ENCODE measurements at regions of chr15 and their contacts with region 1.

Region 1: GRCh38 chr15:60520825-60521368 is 42.0 kb upstream of the ICE2 start:
- DNase-seq: peak; percentile 84
- H3K4me3 Mint-ChIP-seq: no peak overlapping the region
- H3K27ac Mint-ChIP-seq: peak overlapping the region; percentile 61
- H3K4me1 Mint-ChIP-seq: peaks cover 62% of the 10 kb centered on the region
- H3K27me3 Mint-ChIP-seq: no peaks in the 10 kb centered on the region

Region 2: DNA sequence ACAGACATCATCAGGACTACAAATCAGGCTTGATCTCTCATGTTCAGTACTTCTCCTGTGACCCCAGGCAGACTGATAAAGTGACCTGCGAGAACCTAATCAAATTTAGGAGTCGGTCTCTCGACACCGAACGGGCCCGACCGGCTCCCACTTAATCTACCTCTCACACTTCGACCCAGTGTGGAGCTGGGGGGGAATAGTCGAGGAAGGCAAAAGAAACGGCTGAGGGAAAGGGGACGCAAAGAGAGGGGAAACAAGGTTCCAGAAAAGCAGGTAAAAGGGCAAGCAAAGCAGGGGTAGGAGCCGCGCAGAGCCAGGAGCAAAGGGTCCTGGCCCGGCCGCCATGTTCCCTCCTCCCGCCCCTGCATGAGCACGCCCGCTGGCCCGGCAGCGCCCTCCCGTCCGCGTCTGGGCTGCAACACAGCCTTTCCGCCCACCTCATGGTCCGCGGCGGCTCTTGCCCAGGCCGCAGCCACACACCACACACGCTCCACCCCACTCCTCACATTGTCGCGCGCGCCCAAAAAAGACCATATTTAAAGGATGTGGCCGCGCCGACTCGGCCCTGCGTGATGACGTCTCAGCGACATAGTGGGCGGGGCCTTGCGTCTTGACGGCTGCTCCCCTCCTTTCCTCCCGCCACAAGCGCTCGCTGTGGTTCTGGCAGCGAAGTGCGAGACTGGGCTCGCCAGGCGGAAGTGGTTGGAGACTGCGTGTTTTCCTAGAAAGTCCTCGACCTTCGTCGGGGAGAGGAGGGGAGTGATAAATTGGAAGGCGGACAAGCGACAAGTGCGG is 42.1 kb before region 1 on chr15 and contains the start of gene ICE2:
- CTCF ChIA-PET with region 1: interaction called, 12 read pairs
- POLR2A ChIA-PET with region 1: interaction called, 11 read pairs
- DNase-seq: peak; percentile 98
- H3K4me3 Mint-ChIP-seq: peak within 1 kb of the TSS; percentile 98
- H3K27ac Mint-ChIP-seq: peak within 1 kb of the TSS; percentile 97
- H3K4me1 Mint-ChIP-seq: peaks cover 59% of the 10 kb centered on the region
- H3K27me3 Mint-ChIP-seq: no peaks in the 10 kb centered on the region
- total RNA-seq, gene ICE2: 56.9 to 60.4 TPM

Region 3: GRCh38 chr15:60535743-60536142 is 14.8 kb after region 1 on chr15:
- CTCF ChIA-PET with region 1: interaction called, 21 read pairs
- POLR2A ChIA-PET with region 1: interaction called, 11 read pairs
- DNase-seq: no peak
- H3K4me3 Mint-ChIP-seq: no peak overlapping the region
- H3K27ac Mint-ChIP-seq: no peak overlapping the region
- H3K4me1 Mint-ChIP-seq: peaks cover 62% of the 10 kb centered on the region
- H3K27me3 Mint-ChIP-seq: no peaks in the 10 kb centered on the region

Region 4: DNA sequence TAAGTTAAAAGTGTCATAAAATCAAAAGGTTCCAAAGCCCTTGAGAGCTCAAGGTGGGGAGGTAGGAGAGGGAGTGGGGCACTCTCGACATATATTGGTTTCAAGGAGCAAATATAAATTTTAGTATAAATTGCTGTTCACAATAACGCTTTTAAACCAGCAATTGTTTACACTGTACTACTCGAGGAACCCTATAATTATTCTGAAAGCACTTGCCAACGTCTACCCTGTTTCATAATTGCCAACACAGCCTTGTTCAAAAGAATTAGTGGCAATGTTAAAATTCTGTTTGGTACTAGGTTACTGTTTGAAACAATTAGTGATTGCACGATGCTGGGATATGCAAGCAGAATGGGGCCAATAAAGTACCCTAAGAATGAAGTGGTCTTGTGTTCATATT is 34.4 kb after region 1 on chr15:
- CTCF ChIA-PET with region 1: interaction called, 55 read pairs
- POLR2A ChIA-PET with region 1: interaction called, 21 read pairs
- DNase-seq: no peak
- H3K4me3 Mint-ChIP-seq: no peak overlapping the region
- H3K27ac Mint-ChIP-seq: peak overlapping the region; percentile 44
- H3K4me1 Mint-ChIP-seq: peaks cover 88% of the 10 kb centered on the region
- H3K27me3 Mint-ChIP-seq: no peaks in the 10 kb centered on the region

Region 5: GRCh38 chr15:60601098-60601497 is 80.2 kb after region 1 on chr15:
- CTCF ChIA-PET with region 1: no interaction called
- POLR2A ChIA-PET with region 1: no interaction called
- DNase-seq: no peak
- H3K4me3 Mint-ChIP-seq: no peak overlapping the region
- H3K27ac Mint-ChIP-seq: no peak overlapping the region
- H3K4me1 Mint-ChIP-seq: peaks cover 4% of the 10 kb centered on the region
- H3K27me3 Mint-ChIP-seq: peaks cover 6% of the 10 kb centered on the region

Region 6: GRCh38 chr15:60830479-60830878 is 309.6 kb after region 1 on chr15:
- CTCF ChIA-PET with region 1: no interaction called
- POLR2A ChIA-PET with region 1: no interaction called
- DNase-seq: no peak
- H3K4me3 Mint-ChIP-seq: no peak overlapping the region
- H3K27ac Mint-ChIP-seq: no peak overlapping the region
- H3K4me1 Mint-ChIP-seq: no peaks in the 10 kb centered on the region
- H3K27me3 Mint-ChIP-seq: peaks cover 14% of the 10 kb centered on the region

Region 7: DNA sequence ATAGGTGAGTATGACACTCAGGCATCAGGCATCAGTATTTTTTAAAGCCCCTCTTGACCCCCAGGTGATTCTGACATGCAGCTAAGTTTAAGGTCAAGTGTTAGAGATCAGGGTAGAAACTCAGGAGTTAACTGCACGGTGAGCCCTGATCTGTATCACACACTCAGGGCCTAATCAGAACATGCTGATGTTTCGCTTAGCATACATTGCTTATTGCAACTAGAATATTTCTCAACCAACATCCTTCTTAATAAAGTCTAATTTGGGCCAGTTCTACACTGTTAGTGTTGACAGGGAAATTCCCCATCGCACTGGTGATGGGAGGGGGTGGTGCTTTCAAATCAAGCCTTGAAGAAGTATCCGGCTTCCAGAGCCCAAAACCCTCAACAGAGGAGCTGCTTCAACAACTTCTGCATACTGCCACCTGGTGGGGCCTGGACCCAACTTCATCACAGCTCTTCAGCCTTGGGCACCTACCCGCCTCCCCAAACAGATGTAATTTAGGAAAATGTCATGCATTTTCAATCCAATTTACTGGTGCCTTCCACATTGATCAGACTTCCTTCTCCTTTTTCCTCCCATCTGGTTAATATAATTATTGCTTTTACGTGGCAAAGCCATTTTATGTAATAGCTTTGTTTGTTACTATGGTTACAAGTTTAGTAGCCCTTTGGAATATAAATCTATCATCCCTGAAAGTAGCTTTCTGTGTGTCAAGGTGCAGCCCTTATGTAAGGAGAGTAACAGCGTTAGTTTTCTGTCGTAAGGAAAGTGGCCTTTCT is 396.0 kb after region 1 on chr15:
- CTCF ChIA-PET with region 1: interaction called, 12 read pairs
- POLR2A ChIA-PET with region 1: no interaction called
- DNase-seq: peak; percentile 86
- H3K4me3 Mint-ChIP-seq: no peak overlapping the region
- H3K27ac Mint-ChIP-seq: no peak overlapping the region
- H3K4me1 Mint-ChIP-seq: peaks cover 15% of the 10 kb centered on the region
- H3K27me3 Mint-ChIP-seq: peaks cover 6% of the 10 kb centered on the region

Measured in activated CD4-positive, alpha-beta memory T cell treated with anti-CD3 and anti-CD28 coated beads, Interleukin-2, amount 10 ng/mL, durations not matched to agents 7 days and 5 days (primary cell).